ENCODE measurements at regions of chr9 and their contacts with region 1.

Region 1: DNA sequence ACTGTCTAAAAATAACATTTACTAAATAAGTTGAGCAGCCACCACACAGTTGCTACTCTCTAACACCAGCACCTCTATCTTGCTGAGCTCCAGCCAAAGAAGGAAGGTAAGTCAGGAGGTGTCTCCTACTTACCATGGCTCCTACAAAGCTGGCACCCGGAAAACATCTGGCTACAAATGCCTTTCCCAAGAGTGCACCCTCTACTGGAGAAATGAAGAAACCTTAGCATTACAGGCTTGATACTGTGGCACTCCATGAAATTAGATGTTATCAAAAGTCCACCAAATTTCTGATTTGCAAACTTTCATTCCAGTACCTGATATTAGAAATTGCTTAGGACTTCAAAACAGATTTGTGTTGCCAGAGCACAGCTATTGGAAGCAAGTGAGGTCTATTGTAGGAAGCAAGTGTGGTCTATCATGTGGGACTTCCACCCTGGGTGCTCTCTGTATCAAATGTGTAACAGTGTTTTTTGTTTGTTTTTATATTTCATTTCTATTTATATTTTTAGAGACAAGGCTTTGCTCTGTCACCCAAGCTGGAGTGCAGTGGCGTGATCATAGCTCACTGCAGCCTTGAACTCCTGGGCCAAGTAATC is 25.7 kb upstream of the RFK start:
- DNase-seq: no peak
- ATAC-seq: peak; percentile 70
- H3K4me3 ChIP-seq: no peak overlapping the region
- H3K27ac ChIP-seq: no peak overlapping the region
- H3K4me1 ChIP-seq: peaks cover 5% of the 10 kb centered on the region; the same call in 1 of the 2 replicates
- H3K27me3 ChIP-seq: no peaks in the 10 kb centered on the region
- CTCF ChIP-seq: peak; percentile 36 to 61 (median 61)
- EP300 ChIP-seq: no peak
- POLR2A ChIP-seq: no peak
- RAD21 ChIP-seq: peak; percentile 38; the same call in 1 of the 2 replicates

Region 2: GRCh38 chr9:76393963-76394679 is 25.8 kb before region 1 on chr9 and contains the start of gene RFK:
- CTCF ChIA-PET with region 1: interaction called, 13 read pairs
- POLR2A ChIA-PET with region 1: no interaction called
- RAD21 ChIA-PET with region 1: interaction called, 3 read pairs
- SMC1A ChIA-PET with region 1: interaction called, 4 read pairs
- in situ Hi-C with region 1: no loop called
- intact Hi-C with region 1: no loop called
- DNase-seq: peak; percentile 48
- ATAC-seq: peak; percentile 89
- H3K4me3 ChIP-seq: peak within 1 kb of the TSS; percentile 94
- H3K27ac ChIP-seq: peak within 1 kb of the TSS; percentile 54
- H3K4me1 ChIP-seq: peaks cover 4% of the 10 kb centered on the region; the same call in 1 of the 2 replicates
- H3K27me3 ChIP-seq: no peaks in the 10 kb centered on the region
- CTCF ChIP-seq: peak; percentile 42 to 64 (median 46); a peak in 4 of 6 replicates
- EP300 ChIP-seq: no peak
- POLR2A ChIP-seq: peak; percentile 81
- RAD21 ChIP-seq: peak; percentile 62
- polyA plus RNA-seq, gene RFK: 4.4 to 7.9 TPM

Region 3: GRCh38 chr9:76403352-76403751 is 16.5 kb before region 1 on chr9:
- CTCF ChIA-PET with region 1: interaction called, 11 read pairs
- POLR2A ChIA-PET with region 1: no interaction called
- RAD21 ChIA-PET with region 1: no interaction called
- SMC1A ChIA-PET with region 1: interaction called, 5 read pairs
- in situ Hi-C with region 1: no loop called
- intact Hi-C with region 1: no loop called
- DNase-seq: peak; percentile 55
- ATAC-seq: peak; percentile 88
- H3K4me3 ChIP-seq: no peak overlapping the region; the same call in 1 of the 2 replicates
- H3K27ac ChIP-seq: no peak overlapping the region
- H3K4me1 ChIP-seq: peaks cover 10% of the 10 kb centered on the region
- H3K27me3 ChIP-seq: no peaks in the 10 kb centered on the region
- CTCF ChIP-seq: peak; percentile 33 to 63 (median 56); a peak in 5 of 6 replicates
- EP300 ChIP-seq: no peak
- POLR2A ChIP-seq: no peak
- RAD21 ChIP-seq: peak; percentile 74

Measured in GM12878 (cell line).